SK-N-SH (cell line): ENCODE measurements at regions of chr12 and their contacts with region 1.

Region 1: GRCh38 chr12:47715393-47715876 is 9.6 kb upstream of the RPAP3 start:
- DNase-seq: peak; percentile 63
- H3K4me3 ChIP-seq: no peak overlapping the region; a peak in 1 of 4 replicates
- H3K27ac ChIP-seq: no peak overlapping the region
- H3K4me1 ChIP-seq: peaks cover 4 to 14% of the 10 kb centered on the region in 2 experiments; a peak in 2 of 4 replicates
- H3K27me3 ChIP-seq: no peaks in the 10 kb centered on the region
- CTCF ChIP-seq: peak; percentile 86
- EP300 ChIP-seq: no peak
- RAD21 ChIP-seq: peak; percentile 98

Region 2: DNA sequence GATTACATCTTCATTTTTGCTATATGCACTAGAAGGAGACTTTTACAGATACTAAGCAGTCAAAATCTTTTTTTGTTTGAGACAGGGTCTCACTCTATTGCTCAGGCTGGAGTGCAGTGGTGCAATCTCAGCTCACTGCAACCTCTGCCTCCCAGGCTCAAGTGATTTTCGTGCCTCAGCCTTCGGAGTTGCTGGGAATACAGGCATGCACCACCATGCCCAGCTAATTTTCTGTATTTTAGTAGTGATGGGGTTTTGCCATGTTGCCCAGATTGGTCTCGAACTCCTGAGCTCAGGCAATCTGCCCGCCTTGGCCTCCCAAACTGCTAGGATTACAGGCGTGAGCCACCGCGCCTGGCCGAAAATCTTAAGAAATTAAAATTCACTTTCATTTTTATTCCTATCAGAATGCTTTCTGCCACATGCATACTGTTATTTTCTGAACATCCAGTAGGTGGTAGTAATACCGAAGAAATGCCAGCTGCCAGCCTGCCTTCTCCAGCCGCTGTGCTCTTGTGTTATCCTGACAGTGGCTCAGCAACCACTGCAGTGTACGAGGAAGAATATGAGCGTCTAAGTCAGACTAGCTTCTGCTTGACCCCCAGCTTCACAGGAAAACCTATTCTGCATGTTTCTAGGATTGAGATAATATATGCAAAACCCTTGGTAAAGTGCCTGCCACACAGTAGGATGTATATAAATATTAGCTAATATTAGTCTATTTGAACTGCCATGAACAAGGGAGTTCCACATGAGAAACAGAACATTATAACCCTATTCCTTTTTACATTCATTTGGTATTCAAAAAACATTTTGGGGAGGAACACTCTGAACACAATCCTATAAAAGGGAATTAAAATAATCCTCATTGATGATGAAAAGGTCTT is 63.8 kb before region 1 on chr12:
- CTCF ChIA-PET with region 1: interaction called, 22 read pairs
- POLR2A ChIA-PET with region 1: no interaction called
- DNase-seq: peak; percentile 54
- H3K4me3 ChIP-seq: peak overlapping the region in 1 of 2 experiments; percentile 47; a peak in 2 of 4 replicates
- H3K27ac ChIP-seq: no peak overlapping the region
- H3K4me1 ChIP-seq: peaks cover 3 to 4% of the 10 kb centered on the region in 2 experiments; a peak in 2 of 4 replicates
- H3K27me3 ChIP-seq: no peaks in the 10 kb centered on the region
- CTCF ChIP-seq: peak; percentile 75
- EP300 ChIP-seq: no peak
- RAD21 ChIP-seq: peak; percentile 88

Region 3: GRCh38 chr12:47736877-47737676 is 21.6 kb after region 1 on chr12:
- CTCF ChIA-PET with region 1: interaction called, 298 read pairs
- POLR2A ChIA-PET with region 1: no interaction called
- DNase-seq: peak; percentile 84
- H3K4me3 ChIP-seq: no peak overlapping the region; a peak in 1 of 4 replicates
- H3K27ac ChIP-seq: peak overlapping the region; percentile 18 to 94; a peak in 3 of 4 replicates
- H3K4me1 ChIP-seq: peaks cover 20 to 60% of the 10 kb centered on the region in 2 experiments; a peak in 3 of 4 replicates
- H3K27me3 ChIP-seq: no peaks in the 10 kb centered on the region
- CTCF ChIP-seq: no peak
- EP300 ChIP-seq: no peak; a peak in 1 of 4 replicates
- RAD21 ChIP-seq: no peak

Region 4: DNA sequence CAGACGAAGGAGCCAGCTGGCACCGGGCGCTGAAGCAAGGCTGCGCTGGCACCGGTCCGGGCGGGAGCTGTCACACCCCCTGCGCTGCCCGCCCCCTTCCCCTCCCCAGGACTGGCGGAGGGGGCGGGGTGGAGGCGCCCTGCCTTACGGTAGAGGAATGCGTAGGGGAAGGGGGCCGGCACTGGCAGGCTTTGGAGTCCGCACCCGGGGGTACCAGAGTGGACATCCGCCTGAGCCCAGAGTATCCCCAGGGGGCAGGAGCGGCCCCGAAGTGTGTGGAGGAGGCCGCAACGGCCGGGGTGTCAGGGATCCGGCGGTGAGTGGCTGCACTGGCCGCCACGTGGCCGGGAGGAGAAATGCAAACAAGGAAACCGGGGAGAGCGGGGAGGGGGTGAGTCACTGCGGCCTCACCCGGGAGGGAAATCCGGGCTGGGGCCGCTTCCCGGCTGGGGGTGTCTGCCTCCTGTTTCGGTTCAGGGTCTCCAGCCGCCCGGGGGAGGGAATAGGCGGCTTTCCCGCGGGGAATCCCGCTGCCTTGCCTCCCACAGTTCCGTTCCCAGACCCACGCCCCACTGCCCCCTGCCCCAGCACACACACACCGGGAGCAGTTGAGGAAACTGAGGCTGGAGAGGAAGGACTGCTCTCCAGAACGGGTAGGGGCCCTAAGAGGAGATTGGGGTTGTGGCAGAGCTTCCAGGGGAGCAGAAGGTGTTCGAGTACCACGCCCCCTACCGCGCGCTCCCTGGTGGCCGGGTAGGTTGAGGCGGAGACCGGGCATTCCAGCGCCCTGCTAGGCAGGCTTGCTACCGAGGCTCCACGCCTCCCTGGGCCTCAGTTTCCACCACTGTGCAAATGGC is 43.6 kb after region 1 on chr12 and contains the start of gene RAPGEF3:
- CTCF ChIA-PET with region 1: interaction called, 38 read pairs
- POLR2A ChIA-PET with region 1: no interaction called
- DNase-seq: peak; percentile 95
- H3K4me3 ChIP-seq: peak within 1 kb of the TSS; percentile 55 to 69
- H3K27ac ChIP-seq: peak within 1 kb of the TSS in 1 of 2 experiments; percentile 42; a peak in 2 of 4 replicates
- H3K4me1 ChIP-seq: peaks cover 0 to 57% of the 10 kb centered on the region in 2 experiments; a peak in 2 of 4 replicates
- H3K27me3 ChIP-seq: no peaks in the 10 kb centered on the region
- CTCF ChIP-seq: peak; percentile 58
- EP300 ChIP-seq: peak in 1 of 2 experiments; percentile 45; a peak in 1 of 4 replicates
- RAD21 ChIP-seq: peak; percentile 53
- polyA plus RNA-seq, gene RAPGEF3: 0.90 and 0.93 TPM in 2 replicates

Region 5: DNA sequence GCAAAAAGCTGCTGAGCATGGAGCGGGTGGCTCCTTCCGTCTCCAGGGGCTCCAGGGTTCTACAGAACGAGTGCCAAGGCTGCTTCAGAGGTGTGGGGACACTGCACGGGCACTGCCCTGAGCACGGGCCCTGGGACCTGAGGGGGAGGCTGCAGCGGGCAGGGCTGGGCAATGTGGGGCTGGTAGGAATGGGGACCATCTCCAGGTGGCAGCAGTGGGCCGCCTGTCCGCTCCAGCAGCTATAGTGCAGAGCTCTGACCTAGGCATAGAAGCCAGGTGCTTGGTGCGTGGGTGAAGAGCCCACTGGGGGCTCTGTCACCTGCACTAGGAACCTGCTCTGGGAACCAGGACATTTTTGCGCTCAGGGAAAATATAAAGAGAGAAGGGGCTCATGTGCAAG is 82.0 kb after region 1 on chr12:
- CTCF ChIA-PET with region 1: interaction called, 32 read pairs
- POLR2A ChIA-PET with region 1: no interaction called
- DNase-seq: peak; percentile 76
- H3K4me3 ChIP-seq: no peak overlapping the region
- H3K27ac ChIP-seq: no peak overlapping the region
- H3K4me1 ChIP-seq: peaks cover 6 to 21% of the 10 kb centered on the region in 2 experiments; a peak in 2 of 4 replicates
- H3K27me3 ChIP-seq: no peaks in the 10 kb centered on the region
- CTCF ChIP-seq: peak; percentile 41
- EP300 ChIP-seq: no peak
- RAD21 ChIP-seq: peak; percentile 67

Region 6: DNA sequence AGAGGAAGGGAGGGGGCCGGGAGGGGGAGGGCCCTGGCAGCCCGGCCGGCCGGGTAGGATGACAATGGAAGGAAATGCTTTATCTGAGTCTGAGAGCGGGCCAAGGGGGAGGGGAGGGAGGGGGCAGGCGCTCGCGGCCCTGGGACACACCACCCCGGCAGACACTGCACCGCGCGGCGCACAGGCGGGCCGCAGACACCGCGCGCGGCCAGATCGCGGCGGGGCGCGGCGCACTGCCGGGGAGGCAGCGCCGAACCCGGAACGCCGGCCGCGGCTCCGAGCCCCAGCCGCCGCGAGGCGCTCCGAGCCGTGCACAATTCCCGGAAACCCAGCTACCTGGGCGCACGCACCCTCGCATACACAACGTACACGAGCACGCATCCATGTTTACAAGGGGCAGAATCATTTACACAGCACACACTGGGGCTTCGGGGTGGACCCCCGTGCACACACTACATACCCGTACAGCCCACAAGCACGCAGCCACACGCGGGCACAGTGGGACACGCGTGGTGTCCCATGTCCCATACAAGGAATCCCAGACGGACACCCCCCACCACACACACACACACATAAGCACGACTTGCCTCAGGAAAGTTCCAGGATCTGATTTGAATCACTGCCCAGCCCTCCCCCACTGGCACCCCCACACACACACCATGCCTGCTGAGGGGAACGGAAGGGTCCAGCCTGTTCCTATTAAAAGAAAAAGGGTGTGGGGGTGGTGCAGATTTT is 104.6 kb after region 1 on chr12 and contains the start of gene HDAC7:
- CTCF ChIA-PET with region 1: interaction called, 387 read pairs
- POLR2A ChIA-PET with region 1: no interaction called
- DNase-seq: peak; percentile 97
- H3K4me3 ChIP-seq: peak within 1 kb of the TSS; percentile 63 to 83
- H3K27ac ChIP-seq: peak within 1 kb of the TSS; percentile 90 to 92
- H3K4me1 ChIP-seq: peaks cover 32 to 40% of the 10 kb centered on the region in 2 experiments
- H3K27me3 ChIP-seq: no peaks in the 10 kb centered on the region
- CTCF ChIP-seq: no peak
- EP300 ChIP-seq: peak; percentile 11 to 25; a peak in 2 of 4 replicates
- RAD21 ChIP-seq: no peak
- polyA plus RNA-seq, gene HDAC7: 32.7 and 51.0 TPM in 2 replicates